AG04449 (cell line): ENCODE measurements at regions of chr2 and their contacts with region 1.

Region 1: GRCh38 chr2:27133905-27134780 is at the start of gene PREB:
- DNase-seq: peak; percentile 36
- H3K4me3 ChIP-seq: peak within 1 kb of the TSS; percentile 84
- CTCF ChIP-seq: peak; percentile 61

Region 2: GRCh38 chr2:26757873-26758789 is 376.0 kb before region 1 on chr2:
- CTCF ChIA-PET with region 1: no interaction called
- POLR2A ChIA-PET with region 1: no interaction called
- DNase-seq: peak; percentile 96
- H3K4me3 ChIP-seq: no peak overlapping the region; the same call in 1 of the 2 replicates
- CTCF ChIP-seq: no peak

Region 3: GRCh38 chr2:27123302-27124231 is 10.6 kb before region 1 on chr2 and contains the start of gene ABHD1:
- CTCF ChIA-PET with region 1: interaction called, 18 read pairs
- POLR2A ChIA-PET with region 1: interaction called, 8 read pairs
- DNase-seq: no peak
- H3K4me3 ChIP-seq: peak within 1 kb of the TSS; percentile 53
- CTCF ChIP-seq: no peak

Region 4: DNA sequence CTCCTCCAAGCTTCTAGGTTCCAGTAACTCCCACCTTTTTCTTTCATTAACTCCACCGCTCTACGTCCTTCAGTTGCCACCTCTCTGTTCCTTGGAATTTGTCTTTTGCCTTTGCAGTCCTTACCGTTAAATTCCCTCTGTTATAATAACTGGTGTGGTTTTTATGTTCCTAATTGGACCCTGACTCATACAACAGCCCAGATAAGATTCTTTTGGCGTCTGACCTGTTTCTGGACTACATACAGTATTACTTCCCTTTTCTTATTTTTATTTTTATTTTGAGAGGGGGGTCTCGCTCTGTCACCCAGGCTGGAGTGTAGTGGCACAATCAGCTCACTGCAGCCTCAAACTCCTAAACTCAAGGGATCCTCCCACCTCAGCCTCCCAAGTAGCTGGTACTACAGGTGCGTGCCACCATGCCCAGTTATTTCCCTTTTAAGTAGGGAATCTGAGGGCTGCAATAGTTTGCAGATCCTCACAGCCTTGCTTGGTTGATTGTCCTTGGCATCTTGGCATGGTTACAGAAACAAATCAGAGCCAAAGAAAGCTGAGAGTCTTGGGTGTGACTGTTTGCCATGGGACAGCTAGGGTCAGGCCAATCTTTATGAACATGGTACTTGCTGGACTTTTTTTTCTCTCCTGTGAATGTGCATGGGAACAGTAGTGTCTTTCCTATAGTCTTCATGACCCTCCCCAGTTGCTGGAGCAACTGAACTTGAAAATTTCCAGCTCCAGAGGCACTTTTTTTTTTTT is 36.6 kb after region 1 on chr2:
- CTCF ChIA-PET with region 1: interaction called, 26 read pairs
- POLR2A ChIA-PET with region 1: no interaction called
- DNase-seq: no peak
- H3K4me3 ChIP-seq: no peak overlapping the region
- CTCF ChIP-seq: no peak

Region 5: DNA sequence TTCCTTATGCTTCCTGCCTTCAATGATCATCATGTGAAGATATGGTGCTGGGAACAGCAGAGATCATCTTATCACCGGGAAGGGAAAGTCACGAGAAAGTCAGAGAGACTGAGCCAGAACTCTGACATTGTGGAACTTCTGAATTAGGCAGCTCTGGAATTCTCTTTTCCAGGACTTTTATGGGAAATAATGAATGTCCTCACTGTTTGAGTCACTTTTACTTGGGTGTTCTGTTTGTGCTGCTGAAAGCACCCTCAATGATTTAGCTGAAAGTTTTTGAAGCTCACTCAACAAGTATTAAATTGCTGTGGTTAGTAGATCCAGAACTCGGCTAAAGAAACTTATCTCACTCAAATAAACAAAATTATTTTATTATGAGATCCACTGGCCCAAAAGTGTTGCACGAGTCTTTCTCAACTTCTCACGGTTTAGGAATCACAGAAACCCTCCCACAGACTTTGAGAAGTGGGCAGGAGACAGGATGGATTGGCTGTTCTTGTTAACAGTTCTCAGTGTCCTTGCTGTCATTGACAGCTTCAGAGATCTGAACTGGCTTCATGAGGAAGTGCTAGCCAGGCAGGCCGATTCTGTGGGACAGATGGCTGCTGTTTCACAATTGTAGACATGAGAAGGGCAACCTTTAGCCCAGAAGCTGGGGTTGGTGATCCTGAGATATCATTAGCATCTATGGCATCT is 51.3 kb after region 1 on chr2:
- CTCF ChIA-PET with region 1: interaction called, 51 read pairs
- POLR2A ChIA-PET with region 1: no interaction called
- DNase-seq: peak; percentile 75
- H3K4me3 ChIP-seq: no peak overlapping the region; the same call in 1 of the 2 replicates
- CTCF ChIP-seq: no peak